PC-9 (cell line): ENCODE measurements at regions of chr4 and their contacts with region 1.

Region 1: GRCh38 chr4:15851969-15852368 is 73.8 kb downstream of the CD38 start:
- DNase-seq: no peak
- H3K4me3 ChIP-seq: no peak overlapping the region
- H3K27ac ChIP-seq: no peak overlapping the region
- H3K4me1 ChIP-seq: no peaks in the 10 kb centered on the region
- H3K27me3 ChIP-seq: no peaks in the 10 kb centered on the region
- CTCF ChIP-seq: no peak

Region 2: GRCh38 chr4:15868111-15868510 is 16.1 kb after region 1 on chr4:
- CTCF ChIA-PET with region 1: no interaction called
- POLR2A ChIA-PET with region 1: no interaction called
- intact Hi-C with region 1: loop called (anchors 2 kb)
- DNase-seq: peak in 1 of 2 experiments; percentile 5
- H3K4me3 ChIP-seq: no peak overlapping the region
- H3K27ac ChIP-seq: no peak overlapping the region
- H3K4me1 ChIP-seq: no peaks in the 10 kb centered on the region
- H3K27me3 ChIP-seq: no peaks in the 10 kb centered on the region
- CTCF ChIP-seq: no peak